Astrocyte of the cerebellum (primary cell): ENCODE measurements at regions of chr14 and their contacts with region 1.

Region 1: GRCh38 chr14:50775357-50775756 is 55.6 kb downstream of the NIN start:
- DNase-seq: peak; percentile 73
- H3K4me3 ChIP-seq: no peak overlapping the region
- CTCF ChIP-seq: no peak

Region 2: GRCh38 chr14:50619556-50620141 is 155.7 kb before region 1 on chr14:
- in situ Hi-C with region 1: loop called (anchors 25 kb)
- DNase-seq: peak; percentile 47
- H3K4me3 ChIP-seq: no peak overlapping the region
- CTCF ChIP-seq: peak; percentile 70